Gastrocnemius medialis (tissue), 4 donors: ENCODE measurements at regions of chr7 and their contacts with region 1.

Region 1: GRCh38 chr7:137231950-137232349 is 111.6 kb downstream of the PTN start:
- DNase-seq: no peak
- ATAC-seq: no peak
- H3K4me3 ChIP-seq: no peak overlapping the region
- H3K27ac ChIP-seq: no peak overlapping the region
- H3K4me1 ChIP-seq: no peaks in the 10 kb centered on the region
- H3K27me3 ChIP-seq: no peaks in the 10 kb centered on the region
- CTCF ChIP-seq: no peak
- POLR2A ChIP-seq: no peak

Region 2: DNA sequence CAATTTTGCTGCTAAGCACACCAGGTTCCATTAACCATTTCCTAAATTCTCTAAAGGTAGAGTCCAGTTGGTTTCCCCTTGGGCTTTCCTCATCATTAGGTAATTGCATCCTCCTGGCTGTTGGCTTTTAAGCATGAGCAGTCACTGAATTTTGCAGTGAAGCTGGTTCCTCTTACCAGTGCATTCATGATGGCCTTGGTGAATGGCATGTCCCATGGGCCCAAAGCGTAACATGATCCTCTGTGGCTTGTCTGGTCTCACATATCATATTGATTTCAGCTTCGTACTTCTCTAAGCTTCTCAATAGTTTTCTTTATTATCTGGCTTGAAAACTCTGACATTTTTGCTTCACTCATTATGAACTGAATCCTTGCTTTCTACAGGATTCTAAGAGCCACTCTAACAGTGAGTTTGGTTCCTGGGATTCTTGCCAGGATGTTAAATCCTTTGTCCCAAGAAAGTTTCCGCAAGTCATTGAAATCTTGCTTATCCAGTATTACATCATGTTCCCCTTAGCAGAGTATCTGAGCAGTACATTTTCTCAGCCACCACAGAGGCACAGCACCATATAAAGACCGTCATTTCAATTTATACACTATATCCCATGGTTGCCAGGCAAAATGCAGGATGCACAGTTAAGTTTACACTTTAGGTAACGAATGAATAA is 22.7 kb before region 1 on chr7:
- in situ Hi-C with region 1: no loop called
- intact Hi-C with region 1: loop called (anchors 1 kb)
- DNase-seq: no peak
- ATAC-seq: no peak
- H3K4me3 ChIP-seq: no peak overlapping the region
- H3K27ac ChIP-seq: no peak overlapping the region
- H3K4me1 ChIP-seq: no peaks in the 10 kb centered on the region
- H3K27me3 ChIP-seq: no peaks in the 10 kb centered on the region
- CTCF ChIP-seq: no peak
- POLR2A ChIP-seq: no peak